ENCODE measurements at regions of chr16 and their contacts with region 1.

Region 1: DNA sequence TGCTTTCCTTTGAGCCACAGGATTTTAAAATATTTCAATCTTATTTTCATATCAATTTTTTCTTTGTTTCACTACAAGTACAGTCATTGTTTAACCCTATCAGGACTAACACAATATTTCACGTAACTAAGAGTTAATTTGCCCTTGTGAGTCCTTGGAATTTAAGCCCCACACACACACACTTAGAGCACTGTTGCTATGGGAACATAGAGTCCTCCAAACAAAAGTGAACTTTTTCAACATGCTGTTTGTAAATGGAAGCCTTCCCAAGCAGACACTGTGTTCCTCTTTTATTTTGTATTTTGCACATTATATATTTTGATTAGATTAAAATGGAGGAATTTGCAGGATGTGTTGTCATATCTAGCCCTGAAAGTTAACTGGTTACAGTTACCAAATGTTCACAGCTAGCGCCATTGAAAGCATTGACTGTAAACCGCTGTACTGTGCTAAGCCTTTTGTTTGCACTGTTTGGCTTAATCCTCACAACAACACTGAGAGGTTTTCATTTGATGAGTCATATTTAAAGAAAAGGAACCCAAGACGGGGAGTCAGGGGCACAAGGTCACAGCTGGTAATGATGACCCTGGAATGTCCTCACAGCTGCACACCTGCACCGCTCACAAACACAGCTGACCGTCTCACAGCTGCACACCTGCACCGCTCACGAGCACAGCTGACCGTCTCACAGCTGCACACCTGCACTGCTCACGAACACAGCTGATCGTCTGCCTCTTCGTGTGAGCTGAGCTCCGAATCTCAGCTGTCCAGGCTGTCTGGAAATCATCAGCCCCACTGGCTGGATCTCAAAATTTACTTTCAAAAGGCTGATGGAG is 6.3 kb downstream of the HSBP1 start:
- DNase-seq: no peak
- ATAC-seq: no peak
- H3K4me3 Mint-ChIP-seq: no peak overlapping the region
- H3K27ac Mint-ChIP-seq: no peak overlapping the region
- H3K4me1 Mint-ChIP-seq: peaks cover 22% of the 10 kb centered on the region
- H3K27me3 Mint-ChIP-seq: no peaks in the 10 kb centered on the region
- CTCF ChIP-seq: no peak

Region 2: GRCh38 chr16:83826146-83826913 is 12.3 kb after region 1 on chr16:
- CTCF ChIA-PET with region 1: interaction called, 11 read pairs
- POLR2A ChIA-PET with region 1: interaction called, 3 read pairs
- intact Hi-C with region 1: no loop called
- DNase-seq: peak; percentile 89
- ATAC-seq: peak; percentile 94
- H3K4me3 Mint-ChIP-seq: no peak overlapping the region
- H3K27ac Mint-ChIP-seq: no peak overlapping the region
- H3K4me1 Mint-ChIP-seq: peaks cover 2% of the 10 kb centered on the region
- H3K27me3 Mint-ChIP-seq: peaks cover 2% of the 10 kb centered on the region
- CTCF ChIP-seq: peak; percentile 86

Measured in activated CD8-positive, alpha-beta T cell treated with anti-CD3 and anti-CD28 coated beads for 36 hours (primary cell).